BJ (cell line): ENCODE measurements at regions of chr1 and their contacts with region 1.

Region 1: DNA sequence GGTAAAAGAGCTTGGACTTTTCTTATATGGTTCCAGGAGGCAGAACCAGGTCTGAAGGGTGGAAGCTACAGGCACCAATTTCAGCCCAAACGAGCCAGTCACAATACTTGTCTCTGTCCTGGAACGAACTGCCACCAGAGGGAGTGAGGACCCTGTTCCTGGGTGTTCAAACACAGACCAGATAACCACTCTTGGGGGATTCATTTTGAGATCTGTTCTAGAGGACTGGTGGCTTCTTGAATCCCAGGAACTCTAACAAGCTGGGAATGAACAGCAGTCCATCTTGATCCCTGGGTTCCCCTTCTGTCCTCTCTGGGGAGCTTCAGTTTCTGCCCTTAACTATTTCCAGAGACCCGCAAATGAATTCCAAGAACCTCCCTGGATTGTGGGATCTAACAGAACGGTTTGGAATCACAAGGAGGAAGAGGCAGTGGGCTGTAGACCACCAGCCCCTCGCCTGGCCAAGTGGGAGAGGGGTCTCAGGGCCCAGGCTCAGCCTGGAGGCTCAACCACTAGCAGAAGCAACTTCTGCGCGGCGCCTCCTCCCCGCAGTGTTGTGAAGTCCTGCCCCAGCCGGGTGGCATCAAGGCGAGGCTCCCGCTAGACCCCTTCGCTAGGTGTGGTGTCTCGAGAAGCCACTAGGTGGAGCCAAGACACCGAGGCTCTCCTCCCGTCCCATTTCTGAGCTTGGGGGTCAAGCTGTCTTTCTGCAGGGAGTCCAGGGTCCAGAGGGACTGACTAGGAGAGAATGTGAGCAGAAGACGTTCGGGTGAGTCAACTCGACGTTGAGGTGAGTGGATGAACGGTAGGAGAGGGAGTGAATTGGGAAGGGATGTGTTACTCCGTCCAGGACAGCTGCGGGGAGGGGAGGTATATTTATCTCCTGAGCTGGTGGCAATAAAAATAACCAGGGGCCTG is 12.1 kb upstream of the NES start:
- DNase-seq: no peak
- H3K4me3 ChIP-seq: peak overlapping the region; percentile 15; the same call in 1 of the 2 replicates
- H3K27me3 ChIP-seq: no peaks in the 10 kb centered on the region
- CTCF ChIP-seq: peak; percentile 95

Region 2: DNA sequence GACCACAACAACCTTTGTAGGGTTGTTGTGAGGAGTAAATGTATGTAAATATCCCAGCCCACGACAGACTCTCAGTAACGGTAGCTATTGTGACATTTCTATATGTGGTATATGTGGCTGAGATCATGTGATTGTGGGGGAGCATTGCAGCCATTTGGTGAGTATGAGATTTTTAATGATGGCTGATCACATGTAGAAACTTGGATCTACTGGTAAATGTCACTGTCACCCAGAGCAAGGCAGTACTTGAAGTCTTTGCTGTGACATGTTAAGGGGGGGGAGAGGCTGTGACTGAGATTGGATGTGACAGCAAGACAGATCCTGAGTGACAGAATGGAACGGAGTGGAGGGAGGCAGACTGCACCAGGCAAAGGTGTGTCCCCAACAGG is 164.8 kb before region 1 on chr1:
- CTCF ChIA-PET with region 1: no interaction called
- POLR2A ChIA-PET with region 1: no interaction called
- DNase-seq: no peak
- H3K4me3 ChIP-seq: no peak overlapping the region
- H3K27me3 ChIP-seq: no peaks in the 10 kb centered on the region
- CTCF ChIP-seq: no peak

Region 3: GRCh38 chr1:156659994-156660751 is 29.1 kb before region 1 on chr1:
- CTCF ChIA-PET with region 1: interaction called, 548 read pairs
- POLR2A ChIA-PET with region 1: no interaction called
- DNase-seq: peak; percentile 85
- H3K4me3 ChIP-seq: no peak overlapping the region
- H3K27me3 ChIP-seq: peaks cover 18% of the 10 kb centered on the region
- CTCF ChIP-seq: peak; percentile 100

Region 4: DNA sequence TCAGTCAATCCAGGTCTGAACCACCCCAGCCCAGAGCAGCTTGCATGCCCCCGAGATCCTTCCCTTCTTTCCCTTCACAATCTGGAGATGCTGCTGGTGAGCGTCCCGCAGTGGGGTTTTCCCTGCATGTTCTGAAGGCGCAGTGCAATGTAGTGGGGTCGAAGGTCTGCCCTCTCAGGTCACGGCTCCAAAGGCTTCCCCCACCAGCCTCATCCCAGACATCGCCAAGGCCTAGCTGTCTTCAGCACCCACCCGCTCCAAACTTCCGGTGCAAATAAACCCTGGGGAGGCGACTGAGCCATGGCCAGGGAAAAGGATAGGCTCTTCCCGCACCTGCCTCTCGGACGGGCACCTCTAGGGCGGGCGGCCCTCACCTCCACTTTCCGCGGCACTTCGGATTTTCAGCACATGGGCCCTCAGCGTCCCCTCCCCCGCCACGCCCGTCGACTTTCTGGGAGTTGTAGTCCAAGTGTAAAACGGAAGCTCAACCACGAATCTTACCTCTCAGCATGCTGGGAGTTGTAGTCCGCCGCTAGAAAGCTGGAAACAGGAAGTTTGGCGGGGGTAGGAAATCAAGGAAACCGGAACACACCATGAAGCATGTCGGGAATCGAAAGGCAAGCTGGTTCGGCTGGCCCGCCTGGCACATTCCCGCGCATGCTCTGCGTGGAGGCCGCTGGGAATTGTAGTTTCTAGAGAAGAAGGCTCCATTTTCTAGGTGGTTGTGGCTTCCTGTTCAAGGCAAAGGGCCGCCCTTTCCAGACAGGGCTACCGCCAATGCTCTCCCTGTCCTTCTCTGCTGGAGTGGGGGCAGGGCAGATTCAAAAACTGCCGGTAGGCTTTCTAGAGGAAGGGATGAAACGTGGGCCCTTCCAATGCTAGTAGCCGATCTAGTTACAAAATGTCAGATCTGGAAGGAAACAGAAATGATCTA is 51.7 kb after region 1 on chr1 and contains the start of gene MRPL24:
- CTCF ChIA-PET with region 1: interaction called, 12 read pairs
- POLR2A ChIA-PET with region 1: interaction called, 3 read pairs
- DNase-seq: peak; percentile 99
- H3K4me3 ChIP-seq: peak within 1 kb of the TSS; percentile 53
- H3K27me3 ChIP-seq: no peaks in the 10 kb centered on the region
- CTCF ChIP-seq: no peak
- polyA plus RNA-seq, gene MRPL24: 104 and 120 TPM in 2 replicates

Region 5: GRCh38 chr1:156781585-156782186 is 92.4 kb after region 1 on chr1:
- CTCF ChIA-PET with region 1: interaction called, 10 read pairs
- POLR2A ChIA-PET with region 1: no interaction called
- DNase-seq: no peak
- H3K4me3 ChIP-seq: no peak overlapping the region
- H3K27me3 ChIP-seq: no peaks in the 10 kb centered on the region
- CTCF ChIP-seq: no peak

Region 6: DNA sequence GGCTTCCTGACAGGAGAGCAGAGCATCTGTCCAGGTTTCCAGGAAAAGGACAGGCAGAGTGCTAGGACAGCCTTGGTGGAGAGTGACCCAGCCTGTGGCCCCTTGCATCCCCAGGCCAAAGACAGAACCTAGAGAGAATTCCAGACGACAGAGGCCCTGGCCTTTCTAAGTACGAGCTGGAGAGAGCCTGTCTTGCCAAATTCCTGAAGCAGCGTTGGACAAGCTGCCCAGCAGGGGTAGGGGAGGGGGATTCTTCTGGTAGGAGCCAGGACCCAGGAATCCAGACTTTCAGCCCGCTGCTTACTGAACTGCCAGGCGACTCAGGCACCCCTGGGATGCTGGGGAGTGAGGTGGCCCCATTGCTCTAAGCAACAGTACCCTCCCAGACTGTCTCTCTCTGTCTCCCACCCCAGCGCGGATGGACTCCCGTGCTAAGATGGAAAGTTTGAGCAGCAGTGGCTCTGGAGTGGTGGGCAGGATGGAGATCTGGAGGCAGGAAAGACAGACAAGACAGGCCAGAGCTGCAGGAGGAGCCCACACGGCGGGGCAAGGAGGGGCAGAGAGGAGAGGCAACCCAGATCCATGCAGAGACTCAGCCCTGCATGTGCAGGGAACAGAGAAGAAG is 195.4 kb after region 1 on chr1:
- CTCF ChIA-PET with region 1: interaction called, 73 read pairs
- POLR2A ChIA-PET with region 1: no interaction called
- DNase-seq: no peak
- H3K4me3 ChIP-seq: no peak overlapping the region
- H3K27me3 ChIP-seq: peaks cover 34% of the 10 kb centered on the region
- CTCF ChIP-seq: no peak

Region 7: DNA sequence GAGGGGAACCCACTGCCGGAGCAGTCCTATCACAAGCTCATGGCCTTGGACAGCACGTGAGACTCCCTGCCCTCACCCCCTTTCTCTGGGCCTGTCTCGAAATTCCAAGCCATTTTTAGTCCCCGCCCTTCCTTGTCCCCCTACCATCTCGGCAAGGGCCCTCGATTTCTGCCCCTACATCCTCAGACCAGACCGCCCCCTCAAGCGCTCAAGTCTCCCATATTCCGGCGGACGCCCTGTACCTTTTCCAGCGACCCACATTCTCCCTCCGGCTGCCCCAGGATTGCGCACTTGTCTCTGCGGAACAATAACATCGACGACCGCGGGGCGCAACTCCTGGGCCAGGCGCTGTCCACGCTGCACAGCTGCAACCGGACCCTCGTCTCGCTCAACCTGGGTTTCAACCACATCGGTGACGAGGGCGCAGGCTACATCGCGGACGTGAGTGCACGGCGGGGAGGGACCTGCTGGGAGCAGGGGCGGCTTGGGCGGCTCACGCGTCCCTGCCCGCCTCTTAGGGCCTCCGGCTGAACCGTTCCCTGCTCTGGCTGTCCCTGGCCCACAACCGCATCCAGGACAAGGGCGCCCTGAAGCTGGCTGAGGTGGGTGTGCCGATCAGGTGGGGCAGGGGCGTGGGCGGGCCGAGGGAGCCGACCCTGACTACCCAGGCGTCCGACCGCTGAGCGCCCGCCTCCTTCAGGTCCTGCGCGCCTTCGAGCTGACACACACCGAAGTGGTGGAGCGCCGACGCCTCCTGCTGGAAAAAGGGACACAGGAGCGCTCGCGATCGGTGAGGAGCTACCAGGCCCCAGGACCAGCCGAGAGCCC is 238.1 kb after region 1 on chr1:
- CTCF ChIA-PET with region 1: interaction called, 27 read pairs
- POLR2A ChIA-PET with region 1: no interaction called
- DNase-seq: no peak
- H3K4me3 ChIP-seq: peak overlapping the region; percentile 32
- H3K27me3 ChIP-seq: peaks cover 12% of the 10 kb centered on the region
- CTCF ChIP-seq: peak; percentile 89